Activated CD4-positive, alpha-beta T cell treated with anti-CD3 and anti-CD28 coated beads for 36 hours (primary cell): ENCODE measurements at regions of chr3 and their contacts with region 1.

Region 1: DNA sequence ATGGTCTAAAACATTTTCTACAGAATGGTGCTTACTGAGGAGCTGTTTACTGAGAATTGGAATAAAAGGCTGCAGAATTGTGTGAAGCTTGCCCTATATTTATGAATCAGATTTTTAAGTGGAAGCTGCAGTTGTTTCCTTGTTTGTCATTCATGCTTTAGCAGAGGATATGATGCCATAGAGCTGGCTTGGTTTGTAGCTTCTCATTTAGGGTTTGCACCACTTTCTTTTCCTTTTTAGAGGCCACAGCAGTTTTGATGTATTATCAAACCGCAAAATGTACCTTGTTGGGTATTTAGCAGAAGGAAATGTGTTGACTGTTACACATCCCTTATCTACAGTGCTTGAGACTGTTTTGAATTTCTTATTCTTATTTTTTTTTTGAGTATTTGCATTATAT is 66.2 kb downstream of the RASA2 start:
- DNase-seq: no peak
- ATAC-seq: peak; percentile 63
- H3K4me3 Mint-ChIP-seq: no peak overlapping the region
- H3K27ac Mint-ChIP-seq: peak overlapping the region; percentile 88
- H3K4me1 Mint-ChIP-seq: peaks cover 53% of the 10 kb centered on the region
- H3K27me3 Mint-ChIP-seq: no peaks in the 10 kb centered on the region

Region 2: GRCh38 chr3:141279077-141279967 is 273.7 kb before region 1 on chr3:
- CTCF ChIA-PET with region 1: no interaction called
- POLR2A ChIA-PET with region 1: no interaction called
- intact Hi-C with region 1: no loop called
- DNase-seq: peak; percentile 32
- ATAC-seq: peak; percentile 56
- H3K4me3 Mint-ChIP-seq: no peak overlapping the region
- H3K27ac Mint-ChIP-seq: peak overlapping the region; percentile 59
- H3K4me1 Mint-ChIP-seq: peaks cover 17% of the 10 kb centered on the region
- H3K27me3 Mint-ChIP-seq: no peaks in the 10 kb centered on the region

Region 3: DNA sequence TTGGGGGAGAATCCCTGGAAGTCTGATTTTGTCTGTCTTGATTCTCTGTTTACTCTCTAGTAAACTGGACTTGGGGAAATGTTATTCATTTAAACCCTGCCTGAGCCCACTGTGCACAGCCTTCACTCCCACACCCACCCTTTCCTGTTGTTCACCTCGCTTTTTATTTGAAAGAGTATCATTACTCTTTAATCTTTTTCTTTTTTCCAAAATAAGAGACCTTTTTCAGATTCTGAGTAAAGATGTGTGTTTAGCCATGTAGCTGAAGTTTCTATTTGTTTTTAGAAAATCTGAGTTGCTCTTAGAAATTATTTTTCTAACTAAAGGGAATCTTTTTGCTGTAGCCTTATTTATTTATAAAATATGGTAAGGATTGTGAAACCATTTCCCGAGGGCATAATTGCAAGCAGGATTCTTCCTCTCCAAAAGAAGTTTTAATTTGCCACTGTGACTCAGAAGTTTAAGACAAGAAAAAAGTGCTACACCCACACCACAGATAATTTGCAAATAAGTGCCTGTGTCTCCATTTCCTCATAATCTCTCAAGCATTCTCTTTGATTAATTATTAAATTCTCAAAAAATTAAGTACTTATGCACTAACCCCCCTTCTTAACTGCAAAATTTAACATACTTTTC is 22.8 kb before region 1 on chr3:
- CTCF ChIA-PET with region 1: interaction called, 5 read pairs
- POLR2A ChIA-PET with region 1: interaction called, 3 read pairs
- intact Hi-C with region 1: loop called (anchors 1 kb)
- DNase-seq: peak; percentile 37
- ATAC-seq: peak; percentile 63
- H3K4me3 Mint-ChIP-seq: peak overlapping the region; percentile 1
- H3K27ac Mint-ChIP-seq: peak overlapping the region; percentile 37
- H3K4me1 Mint-ChIP-seq: peaks cover 72% of the 10 kb centered on the region
- H3K27me3 Mint-ChIP-seq: no peaks in the 10 kb centered on the region

Region 4: GRCh38 chr3:141542989-141543388 is 10.1 kb before region 1 on chr3:
- CTCF ChIA-PET with region 1: interaction called, 8 read pairs
- POLR2A ChIA-PET with region 1: interaction called, 9 read pairs
- intact Hi-C with region 1: loop called (anchors 1 kb)
- DNase-seq: no peak
- ATAC-seq: no peak
- H3K4me3 Mint-ChIP-seq: no peak overlapping the region
- H3K27ac Mint-ChIP-seq: peak overlapping the region; percentile 77
- H3K4me1 Mint-ChIP-seq: peaks cover 84% of the 10 kb centered on the region
- H3K27me3 Mint-ChIP-seq: no peaks in the 10 kb centered on the region

Region 5: DNA sequence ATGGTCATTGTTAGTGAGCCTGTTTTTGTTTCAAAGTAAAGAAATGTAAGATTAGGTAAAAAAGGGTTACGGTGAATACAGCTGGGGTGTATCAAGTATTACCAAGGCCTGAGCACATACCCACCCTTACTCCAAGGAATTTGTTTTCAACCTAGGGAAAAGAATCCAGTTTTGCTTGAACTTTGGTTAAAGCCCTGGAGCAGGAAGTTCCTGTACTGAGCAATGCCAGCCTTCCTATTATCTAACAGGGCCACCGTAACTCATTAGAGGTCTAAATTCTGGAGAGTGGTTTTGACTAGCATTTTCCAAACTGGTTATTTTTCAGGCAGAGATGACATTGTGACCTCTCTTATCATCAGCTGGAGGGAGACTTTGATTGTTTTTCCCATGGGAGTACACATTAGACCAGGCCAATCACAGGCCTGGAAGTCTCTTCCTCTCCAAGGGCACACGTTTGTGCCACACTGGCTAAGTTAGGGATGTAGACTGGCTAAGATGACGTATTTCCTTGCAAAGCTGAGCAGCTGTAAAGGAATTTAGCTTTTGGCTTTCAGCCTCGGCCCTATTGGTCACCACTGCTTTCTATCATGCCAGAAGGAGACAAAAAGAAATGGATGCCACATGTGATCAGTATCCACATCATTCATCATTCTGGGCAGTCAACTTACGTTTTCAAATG is 157.7 kb after region 1 on chr3:
- CTCF ChIA-PET with region 1: no interaction called
- POLR2A ChIA-PET with region 1: no interaction called
- intact Hi-C with region 1: no loop called
- DNase-seq: no peak
- ATAC-seq: no peak
- H3K4me3 Mint-ChIP-seq: no peak overlapping the region
- H3K27ac Mint-ChIP-seq: no peak overlapping the region
- H3K4me1 Mint-ChIP-seq: no peaks in the 10 kb centered on the region
- H3K27me3 Mint-ChIP-seq: no peaks in the 10 kb centered on the region